Mammary epithelial cell (primary cell): ENCODE measurements at regions of chr9 and their contacts with region 1.

Region 1: DNA sequence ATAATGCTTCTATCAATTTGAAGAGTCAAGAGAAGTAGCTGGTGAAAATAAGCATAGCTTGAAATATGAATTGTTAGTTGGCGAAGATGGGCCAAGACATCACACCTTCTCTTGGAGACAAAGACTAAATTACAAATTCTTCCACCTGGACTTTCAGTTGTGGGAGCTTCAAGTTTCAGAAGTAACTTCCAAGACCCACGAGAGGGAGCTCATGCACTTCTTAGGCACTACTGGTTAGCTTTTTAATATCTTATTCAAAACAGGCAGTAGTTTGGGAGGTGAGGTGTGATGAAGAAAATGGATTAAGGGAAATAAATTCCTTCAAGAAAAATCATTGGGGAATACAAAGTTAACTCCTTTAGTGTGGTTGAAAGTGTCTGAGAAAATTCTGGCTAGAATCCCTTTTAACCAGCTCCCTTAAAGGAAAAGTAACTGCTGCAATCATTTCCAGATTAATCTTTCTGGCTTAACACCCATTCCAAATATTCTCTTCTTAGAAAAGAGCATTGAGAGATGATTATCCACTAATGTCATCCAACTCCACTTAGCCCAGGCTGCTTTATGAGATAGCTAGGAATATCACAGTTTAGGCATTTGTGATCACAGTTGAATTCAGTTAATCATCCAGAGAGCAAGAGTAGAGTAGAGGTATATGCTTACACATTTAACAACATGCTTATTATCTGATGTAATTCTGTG is 139.5 kb upstream of the DMRTA1 start:
- DNase-seq: peak; percentile 50
- H3K4me3 ChIP-seq: no peak overlapping the region
- H3K27ac ChIP-seq: no peak overlapping the region
- H3K4me1 ChIP-seq: no peaks in the 10 kb centered on the region
- H3K27me3 ChIP-seq: no peaks in the 10 kb centered on the region
- CTCF ChIP-seq: peak; percentile 66 to 86

Region 2: DNA sequence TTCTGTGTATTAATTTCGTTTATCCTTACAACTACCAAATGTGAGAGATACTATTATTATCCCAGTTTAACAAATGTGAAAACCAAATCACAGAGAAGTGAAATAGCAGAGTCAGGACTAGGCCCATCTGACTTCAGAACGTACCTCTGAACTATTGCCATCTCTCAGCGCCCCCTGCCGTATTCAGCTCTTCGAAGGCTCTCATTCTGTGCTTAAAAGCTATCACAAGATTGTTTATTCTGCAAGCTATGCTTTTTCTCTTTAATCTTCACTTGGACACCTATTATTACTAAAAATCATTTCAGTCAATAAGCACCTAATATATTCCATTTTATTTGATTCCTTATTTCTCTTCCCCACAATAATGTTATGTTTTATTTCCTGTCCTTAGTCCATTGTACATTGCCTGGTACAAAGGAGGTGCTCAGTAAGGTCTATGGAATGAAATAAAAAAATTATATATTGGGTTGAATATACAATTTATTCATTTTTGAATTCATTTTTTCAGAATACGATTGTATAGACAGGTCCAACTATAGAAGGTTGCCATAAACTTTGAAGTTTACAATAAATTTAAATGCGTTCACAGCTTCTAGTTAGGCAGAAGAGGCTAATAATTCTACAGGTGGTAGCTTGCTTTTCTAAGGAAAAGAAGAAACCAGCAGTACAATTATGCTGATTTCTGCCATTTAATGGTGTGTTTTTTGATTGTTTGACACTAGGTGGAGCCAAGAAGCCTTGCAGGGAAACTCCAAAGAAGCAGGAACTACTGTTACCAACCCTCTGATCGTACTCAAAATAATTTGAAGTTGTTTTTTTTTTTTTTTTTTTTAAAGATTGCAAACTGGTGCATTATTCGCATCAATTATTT is 62.8 kb before region 1 on chr9:
- CTCF ChIA-PET with region 1: no interaction called
- dilution Hi-C with region 1: no loop called
- in situ Hi-C with region 1: no loop called
- intact Hi-C with region 1: loop called (anchors 1 kb)
- DNase-seq: peak; percentile 58
- H3K4me3 ChIP-seq: peak overlapping the region in 1 of 3 experiments; percentile 19
- H3K27ac ChIP-seq: no peak overlapping the region
- H3K4me1 ChIP-seq: peaks cover 30% of the 10 kb centered on the region
- H3K27me3 ChIP-seq: no peaks in the 10 kb centered on the region
- CTCF ChIP-seq: peak; percentile 59 to 77

Region 3: DNA sequence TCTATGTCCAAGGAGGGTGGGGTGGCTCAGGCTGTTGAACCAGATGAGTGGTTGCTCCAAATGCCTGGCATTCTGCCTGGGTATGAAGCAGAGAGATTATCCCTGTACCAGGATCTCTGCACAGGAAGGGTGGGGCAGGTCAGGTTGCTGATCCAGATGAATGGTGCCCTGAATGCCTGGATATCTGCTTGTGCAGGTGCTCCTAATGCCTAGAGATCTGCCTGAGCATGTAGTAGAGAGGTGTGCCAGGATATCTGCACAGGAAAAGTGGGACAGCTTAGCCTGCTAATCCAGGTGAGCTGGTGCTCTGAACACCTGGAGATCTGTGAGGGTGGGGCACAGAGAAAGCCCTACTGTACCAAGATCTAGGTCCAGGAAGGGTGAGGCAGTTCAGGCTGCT is 50.1 kb before region 1 on chr9:
- CTCF ChIA-PET with region 1: no interaction called
- dilution Hi-C with region 1: no loop called
- in situ Hi-C with region 1: no loop called
- intact Hi-C with region 1: loop called (anchors 5 kb)
- DNase-seq: peak; percentile 98
- H3K4me3 ChIP-seq: no peak overlapping the region
- H3K27ac ChIP-seq: peak overlapping the region; percentile 87
- H3K4me1 ChIP-seq: peaks cover 26% of the 10 kb centered on the region
- H3K27me3 ChIP-seq: no peaks in the 10 kb centered on the region
- CTCF ChIP-seq: no peak

Region 4: DNA sequence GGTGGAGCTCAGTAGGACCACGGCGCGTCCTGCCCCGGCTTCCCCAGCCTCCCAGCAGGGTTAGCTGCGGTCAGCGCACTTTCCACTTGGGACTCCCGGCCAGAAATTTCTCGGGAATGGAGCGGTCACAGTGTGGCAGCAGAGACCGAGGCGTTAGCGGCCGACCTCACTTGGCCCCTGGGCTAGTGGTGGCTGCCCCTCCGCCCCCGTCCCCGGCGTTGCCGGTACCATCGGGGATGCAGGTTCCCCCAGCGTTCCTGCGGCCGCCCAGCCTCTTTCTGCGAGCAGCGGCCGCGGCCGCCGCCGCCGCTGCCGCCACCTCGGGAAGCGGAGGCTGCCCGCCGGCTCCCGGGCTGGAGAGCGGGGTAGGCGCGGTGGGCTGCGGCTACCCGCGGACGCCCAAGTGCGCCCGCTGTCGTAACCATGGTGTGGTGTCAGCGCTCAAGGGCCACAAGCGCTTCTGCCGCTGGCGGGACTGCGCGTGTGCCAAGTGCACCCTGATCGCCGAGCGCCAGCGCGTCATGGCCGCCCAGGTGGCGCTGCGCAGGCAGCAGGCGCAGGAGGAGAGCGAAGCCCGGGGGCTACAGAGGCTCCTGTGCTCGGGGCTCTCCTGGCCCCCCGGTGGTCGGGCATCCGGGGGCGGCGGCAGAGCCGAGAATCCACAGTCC is 139.9 kb after region 1 on chr9:
- CTCF ChIA-PET with region 1: interaction called, 31 read pairs
- dilution Hi-C with region 1: no loop called
- in situ Hi-C with region 1: loop called (anchors 5 kb)
- intact Hi-C with region 1: loop called (anchors 1 kb)
- DNase-seq: peak; percentile 63
- H3K4me3 ChIP-seq: peak overlapping the region; percentile 68 to 86 (median 71)
- H3K27ac ChIP-seq: no peak overlapping the region
- H3K4me1 ChIP-seq: no peaks in the 10 kb centered on the region
- H3K27me3 ChIP-seq: no peaks in the 10 kb centered on the region
- CTCF ChIP-seq: peak; percentile 12 to 49

Region 5: GRCh38 chr9:22452415-22453010 is 145.4 kb after region 1 on chr9:
- CTCF ChIA-PET with region 1: interaction called, 31 read pairs
- dilution Hi-C with region 1: no loop called
- in situ Hi-C with region 1: loop called (anchors 5 kb)
- intact Hi-C with region 1: loop called (anchors 1 kb)
- DNase-seq: no peak
- H3K4me3 ChIP-seq: no peak overlapping the region
- H3K27ac ChIP-seq: no peak overlapping the region
- H3K4me1 ChIP-seq: no peaks in the 10 kb centered on the region
- H3K27me3 ChIP-seq: no peaks in the 10 kb centered on the region
- CTCF ChIP-seq: peak; percentile 79 to 91